Body of pancreas (tissue), 4 donors: ENCODE measurements at regions of chr14 and their contacts with region 1.

Region 1: GRCh38 chr14:95442633-95443021 is 73.8 kb downstream of the SYNE3 start:
- DNase-seq: peak; percentile 80 to 84 (median 82)
- ATAC-seq: peak; percentile 91
- H3K4me3 ChIP-seq: no peak overlapping the region
- H3K27ac ChIP-seq: no peak overlapping the region
- H3K4me1 ChIP-seq: no peaks in the 10 kb centered on the region
- H3K27me3 ChIP-seq: no peaks in the 10 kb centered on the region
- CTCF ChIP-seq: peak; percentile 61 to 83 (median 75)
- POLR2A ChIP-seq: no peak

Region 2: GRCh38 chr14:95340201-95340697 is 102.4 kb before region 1 on chr14:
- intact Hi-C with region 1: no loop called
- DNase-seq: peak; percentile 98 to 99 (median 98)
- ATAC-seq: peak; percentile 86
- H3K4me3 ChIP-seq: no peak overlapping the region
- H3K27ac ChIP-seq: peak overlapping the region; percentile 91 to 99 (median 96)
- H3K4me1 ChIP-seq: peaks cover 64% of the 10 kb centered on the region
- H3K27me3 ChIP-seq: no peaks in the 10 kb centered on the region
- CTCF ChIP-seq: no peak
- POLR2A ChIP-seq: peak in 2 of 3 donors; percentile 68 to 70

Region 3: GRCh38 chr14:95527387-95528002 is 84.9 kb after region 1 on chr14:
- intact Hi-C with region 1: loop called (anchors 5 kb)
- DNase-seq: peak; percentile 33 to 62 (median 46)
- ATAC-seq: peak; percentile 51
- H3K4me3 ChIP-seq: no peak overlapping the region
- H3K27ac ChIP-seq: no peak overlapping the region
- H3K4me1 ChIP-seq: peaks cover 47% of the 10 kb centered on the region
- H3K27me3 ChIP-seq: no peaks in the 10 kb centered on the region
- CTCF ChIP-seq: peak; percentile 37 to 74 (median 54)
- POLR2A ChIP-seq: no peak

Region 4: DNA sequence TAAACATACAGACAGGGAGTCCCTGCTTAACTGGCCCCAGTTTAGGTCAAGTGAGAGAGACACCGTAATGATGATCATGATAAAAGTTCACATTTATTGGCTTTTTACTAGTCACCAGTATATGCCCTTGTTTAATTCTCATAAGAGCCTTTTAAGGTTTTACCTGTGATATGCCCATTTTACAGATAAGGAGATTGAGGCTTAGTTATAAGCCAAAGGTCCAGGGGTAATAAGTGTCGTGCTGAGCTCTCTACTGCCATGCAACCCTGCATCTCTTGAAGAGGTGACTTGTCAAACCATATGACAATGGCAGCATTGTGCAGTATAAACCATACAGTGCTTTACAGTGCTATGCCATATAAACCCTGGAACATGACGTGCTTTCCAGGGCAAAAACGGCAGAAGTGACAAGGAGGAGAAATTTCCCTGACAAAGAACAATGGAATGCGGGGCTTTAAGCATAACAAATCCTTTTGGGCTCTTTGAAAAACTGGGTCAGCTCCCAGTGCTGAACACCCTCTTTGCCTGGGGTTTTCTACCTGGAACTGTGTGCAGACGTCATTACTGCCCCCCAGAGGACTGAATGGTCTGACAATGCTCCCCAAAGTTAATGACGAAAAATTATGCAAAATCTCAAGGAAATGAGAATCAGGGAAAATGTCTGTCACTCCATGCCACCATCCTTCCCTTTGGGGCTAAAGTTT is 536.9 kb after region 1 on chr14:
- intact Hi-C with region 1: loop called (anchors 10 kb)
- DNase-seq: peak in 1 of 4 donors; percentile 8
- ATAC-seq: no peak
- H3K4me3 ChIP-seq: no peak overlapping the region
- H3K27ac ChIP-seq: no peak overlapping the region
- H3K4me1 ChIP-seq: no peaks in the 10 kb centered on the region
- H3K27me3 ChIP-seq: no peaks in the 10 kb centered on the region
- CTCF ChIP-seq: no peak
- POLR2A ChIP-seq: no peak